Ascending aorta (tissue), 2 donors: ENCODE measurements at regions of chr14 and their contacts with region 1.

Region 1: DNA sequence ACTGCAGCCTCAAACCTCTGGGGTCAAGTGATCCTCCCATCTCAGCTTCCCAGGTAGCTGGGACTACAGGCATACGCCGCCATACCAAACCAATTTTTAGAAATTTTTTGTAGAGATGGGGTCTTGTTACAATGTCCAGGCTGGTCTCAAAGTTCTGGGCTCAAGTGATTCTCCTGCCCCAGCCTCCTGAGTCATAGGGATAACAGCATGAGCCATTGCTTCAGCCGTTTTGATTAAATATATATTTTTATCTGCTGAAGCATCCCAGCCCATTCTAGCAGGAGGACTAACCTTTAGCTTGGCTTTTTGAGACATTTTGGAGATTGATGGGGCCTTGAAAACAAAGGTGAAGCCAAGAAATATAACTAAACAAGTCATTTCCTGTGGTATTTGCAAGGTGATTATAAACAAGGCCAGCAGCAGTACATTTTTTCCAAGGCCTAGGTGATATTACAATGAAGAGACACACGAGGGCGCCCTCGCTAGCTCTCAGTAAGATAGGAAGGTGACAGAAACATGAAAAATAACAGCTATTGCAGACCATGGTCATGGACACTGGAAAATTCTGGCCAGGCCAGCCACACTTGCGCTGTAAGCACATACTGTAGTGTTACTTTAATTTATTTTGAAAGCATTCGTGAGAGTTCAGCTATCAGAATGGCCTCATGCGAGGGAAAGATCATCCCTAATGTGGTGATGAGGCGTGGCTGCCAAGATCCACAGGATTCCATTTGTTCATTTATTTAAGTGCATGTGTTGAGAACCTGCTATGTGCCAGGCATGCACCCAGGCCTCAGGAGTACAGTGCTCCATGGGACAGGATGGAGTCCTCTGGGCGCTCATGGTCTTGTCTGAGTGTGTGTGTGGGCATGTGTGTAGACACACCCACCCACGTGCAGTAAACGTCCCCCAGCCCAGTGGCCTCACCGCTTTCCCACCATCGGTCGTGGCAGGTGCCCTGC is 63.5 kb downstream of the DGLUCY start:
- DNase-seq: no peak
- H3K4me3 ChIP-seq: no peak overlapping the region
- H3K27ac ChIP-seq: no peak overlapping the region
- H3K4me1 ChIP-seq: no peaks in the 10 kb centered on the region
- H3K27me3 ChIP-seq: no peaks in the 10 kb centered on the region
- CTCF ChIP-seq: peak; percentile 40 to 73 (median 46)

Region 2: GRCh38 chr14:90903101-90903500 is 274.3 kb before region 1 on chr14:
- intact Hi-C with region 1: loop called (anchors 1 kb)
- DNase-seq: no peak
- H3K4me3 ChIP-seq: no peak overlapping the region
- H3K27ac ChIP-seq: no peak overlapping the region
- H3K4me1 ChIP-seq: no peaks in the 10 kb centered on the region
- H3K27me3 ChIP-seq: no peaks in the 10 kb centered on the region
- CTCF ChIP-seq: peak; percentile 65 to 69 (median 68)